ENCODE measurements at regions of chr6 and their contacts with region 1.

Region 1: DNA sequence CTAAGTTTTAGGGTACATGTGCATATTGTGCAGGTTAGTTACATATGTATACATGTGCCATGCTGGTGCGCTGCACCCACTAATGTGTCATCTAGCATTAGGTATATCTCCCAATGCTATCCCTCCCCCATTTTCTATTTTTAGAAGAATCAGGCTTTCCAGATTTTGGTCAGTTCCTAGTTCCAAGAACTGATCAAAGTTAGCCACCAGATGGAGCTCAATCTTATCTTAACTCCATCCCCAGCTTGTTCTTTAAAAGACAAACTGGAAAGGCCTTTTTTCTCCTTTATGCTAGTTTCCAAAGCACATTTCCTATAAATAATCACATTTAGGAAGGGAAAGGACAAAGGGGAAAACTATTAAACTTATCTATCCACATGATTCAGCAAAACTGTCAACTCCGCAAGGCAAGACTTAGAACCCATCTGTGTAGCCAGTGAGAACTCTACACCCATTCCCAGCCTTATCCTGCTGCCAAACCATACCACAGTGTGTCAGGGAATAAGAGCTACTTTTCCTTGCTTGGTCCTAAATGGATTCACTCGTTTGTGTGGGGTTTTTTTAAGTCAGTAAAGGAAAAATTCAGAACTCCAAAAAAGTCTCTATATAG is 22.8 kb upstream of the KHDC1 start:
- DNase-seq: peak; percentile 23
- H3K4me3 ChIP-seq: no peak overlapping the region
- H3K27ac ChIP-seq: no peak overlapping the region
- H3K27me3 ChIP-seq: no peaks in the 10 kb centered on the region
- CTCF ChIP-seq: peak; percentile 64

Region 2: DNA sequence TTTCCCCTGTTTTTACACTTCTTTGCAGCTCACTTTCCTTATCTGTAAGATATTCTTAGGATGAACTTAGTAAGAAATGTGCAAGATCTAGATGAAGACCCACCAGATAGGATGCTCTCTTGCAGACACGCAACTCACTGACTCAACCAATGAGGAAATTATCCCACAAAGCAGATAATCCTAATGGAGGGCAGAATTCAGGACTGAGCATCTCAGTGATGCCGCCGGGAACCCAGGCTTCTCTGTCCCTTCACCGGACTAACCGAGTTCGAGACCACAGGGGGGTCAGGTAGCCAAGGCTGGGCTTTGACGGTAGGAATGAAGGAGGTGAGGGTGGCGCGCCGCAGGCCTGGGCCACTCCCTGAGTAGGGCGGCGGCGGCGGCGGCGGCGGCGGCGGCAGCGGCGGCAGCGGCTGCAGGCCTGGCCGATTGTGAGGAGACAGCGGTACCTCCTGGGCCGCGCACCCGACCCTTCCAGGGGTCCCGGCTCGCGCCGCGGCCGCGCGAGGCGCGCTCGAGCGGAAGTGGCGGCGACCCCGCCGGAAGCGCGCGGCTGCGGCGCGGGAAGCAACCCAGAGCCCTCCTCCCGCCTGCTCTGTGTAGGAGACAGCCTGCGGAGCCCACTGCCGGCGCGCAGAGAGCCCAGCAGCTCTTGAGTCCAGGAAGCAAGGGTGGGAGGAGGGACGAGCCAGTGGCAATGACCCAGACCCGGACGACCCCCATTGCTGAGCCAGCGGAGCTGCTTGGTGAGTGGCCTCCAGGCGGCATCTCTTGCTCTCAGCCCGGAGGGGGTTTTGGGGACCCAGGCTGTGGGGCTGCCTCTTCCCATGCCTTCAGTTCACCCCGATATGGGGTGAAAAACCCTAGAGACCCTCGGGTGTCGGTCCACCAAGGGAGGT is 22.9 kb before region 1 on chr6 and contains the start of gene KHDC1:
- CTCF ChIA-PET with region 1: interaction called, 14 read pairs
- POLR2A ChIA-PET with region 1: interaction called, 6 read pairs
- DNase-seq: peak; percentile 7
- H3K4me3 ChIP-seq: peak within 1 kb of the TSS; percentile 84
- H3K27ac ChIP-seq: peak within 1 kb of the TSS; percentile 52
- H3K27me3 ChIP-seq: no peaks in the 10 kb centered on the region
- CTCF ChIP-seq: no peak; the same call in 1 of the 2 replicates
- polyA plus RNA-seq, gene KHDC1: 5.9 and 6.5 TPM in 2 replicates

Region 3: DNA sequence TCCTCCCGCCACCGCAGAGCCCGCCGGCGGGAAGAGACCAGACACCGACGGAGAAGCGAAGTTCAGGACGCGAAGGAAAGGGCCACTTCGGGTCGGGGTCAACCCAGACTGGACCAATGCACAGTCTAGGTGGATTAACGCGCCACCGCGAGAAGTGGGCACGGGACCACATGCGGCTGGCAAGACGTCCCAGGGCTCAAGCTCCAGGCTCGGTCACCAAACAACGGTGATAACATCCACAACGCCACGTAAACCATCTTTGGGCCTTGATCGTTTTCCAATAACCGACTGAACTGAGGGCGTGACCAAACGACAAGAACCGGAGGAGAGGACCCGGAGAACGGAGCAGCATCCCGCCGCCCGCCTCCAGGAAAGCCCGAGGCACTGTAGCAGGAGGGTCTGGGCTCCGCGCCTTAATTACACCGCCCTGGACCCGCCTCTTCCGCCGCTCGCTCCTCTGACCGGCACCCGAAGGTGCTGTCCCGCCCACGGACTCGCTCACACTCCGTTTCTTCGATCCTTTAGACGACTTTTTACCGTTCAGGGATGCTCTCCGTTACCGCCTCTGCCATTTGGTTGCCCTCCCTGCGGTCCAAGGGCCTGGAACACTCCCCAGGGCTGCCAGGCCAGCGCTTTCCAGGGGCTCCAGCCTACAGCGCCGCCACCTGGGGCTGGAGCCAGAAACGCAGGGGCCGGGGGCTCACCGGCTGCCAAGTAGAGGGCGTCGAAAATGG is 24.2 kb after region 1 on chr6:
- CTCF ChIA-PET with region 1: interaction called, 10 read pairs
- POLR2A ChIA-PET with region 1: interaction called, 3 read pairs
- DNase-seq: no peak
- H3K4me3 ChIP-seq: peak overlapping the region; percentile 90
- H3K27ac ChIP-seq: peak overlapping the region; percentile 73
- H3K27me3 ChIP-seq: no peaks in the 10 kb centered on the region
- CTCF ChIP-seq: peak; percentile 74

Region 4: DNA sequence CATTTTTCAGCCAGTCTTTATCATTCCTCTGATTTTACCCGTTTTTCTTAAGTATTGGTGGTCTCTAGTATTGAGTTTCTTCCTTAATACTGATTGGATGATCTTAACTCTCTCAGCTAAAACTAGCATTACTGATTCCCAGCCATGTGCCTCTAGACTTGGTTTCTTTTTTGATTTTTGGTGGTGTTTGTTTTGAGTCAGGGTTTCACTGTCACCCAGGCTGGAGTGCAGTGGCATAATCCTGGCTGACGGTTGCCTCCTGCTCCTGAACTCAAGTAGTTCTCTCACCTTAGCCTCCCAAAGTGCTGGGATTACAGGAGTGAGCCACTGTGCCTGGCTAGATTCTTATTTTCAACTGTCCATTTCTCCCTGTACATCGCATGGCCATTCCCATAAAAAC is 43.4 kb after region 1 on chr6:
- CTCF ChIA-PET with region 1: interaction called, 191 read pairs
- POLR2A ChIA-PET with region 1: interaction called, 4 read pairs
- DNase-seq: no peak
- H3K4me3 ChIP-seq: no peak overlapping the region
- H3K27ac ChIP-seq: no peak overlapping the region
- H3K27me3 ChIP-seq: no peaks in the 10 kb centered on the region
- CTCF ChIP-seq: no peak

Region 5: GRCh38 chr6:73388800-73389512 is 103.2 kb after region 1 on chr6:
- CTCF ChIA-PET with region 1: interaction called, 32 read pairs
- POLR2A ChIA-PET with region 1: interaction called, 4 read pairs
- DNase-seq: peak; percentile 18
- H3K4me3 ChIP-seq: peak overlapping the region; percentile 65
- H3K27ac ChIP-seq: peak overlapping the region; percentile 31
- H3K27me3 ChIP-seq: no peaks in the 10 kb centered on the region
- CTCF ChIP-seq: peak; percentile 88

Measured in AG04450 (cell line).